ENCODE measurements at regions of chr2 and their contacts with region 1.

Region 1: GRCh38 chr2:161172901-161173540 is 12.8 kb downstream of the TANK start:
- DNase-seq: no peak
- H3K4me3 ChIP-seq: no peak overlapping the region
- H3K4me3 Mint-ChIP-seq: peak overlapping the region in 2 of 8 donors; percentile 1 to 39
- H3K27ac ChIP-seq: no peak overlapping the region
- H3K27ac Mint-ChIP-seq: peak overlapping the region in 6 of 7 donors; percentile 0 to 61 (median 6)
- H3K4me1 ChIP-seq: peaks cover 67% of the 10 kb centered on the region
- H3K4me1 Mint-ChIP-seq: peaks cover 50 to 73% (median 61%) of the 10 kb centered on the region in 4 donors
- H3K27me3 ChIP-seq: no peaks in the 10 kb centered on the region
- H3K27me3 Mint-ChIP-seq: no peaks in the 10 kb centered on the region

Region 2: GRCh38 chr2:161190050-161190449 is 17.0 kb after region 1 on chr2:
- CTCF ChIA-PET with region 1: no interaction called
- POLR2A ChIA-PET with region 1: no interaction called
- intact Hi-C with region 1: loop called (anchors 2 kb)
- DNase-seq: no peak
- H3K4me3 ChIP-seq: no peak overlapping the region
- H3K4me3 Mint-ChIP-seq: no peak overlapping the region
- H3K27ac ChIP-seq: no peak overlapping the region
- H3K27ac Mint-ChIP-seq: peak overlapping the region in 1 of 7 donors; percentile 55
- H3K4me1 ChIP-seq: peaks cover 15% of the 10 kb centered on the region
- H3K4me1 Mint-ChIP-seq: peaks cover 37 to 73% (median 65%) of the 10 kb centered on the region in 4 donors
- H3K27me3 ChIP-seq: no peaks in the 10 kb centered on the region
- H3K27me3 Mint-ChIP-seq: no peaks in the 10 kb centered on the region